Activated B cell treated with CpG ODN at 0.5 μM for 24 hours (primary cell): ENCODE measurements at regions of chrX and their contacts with region 1.

Region 1: DNA sequence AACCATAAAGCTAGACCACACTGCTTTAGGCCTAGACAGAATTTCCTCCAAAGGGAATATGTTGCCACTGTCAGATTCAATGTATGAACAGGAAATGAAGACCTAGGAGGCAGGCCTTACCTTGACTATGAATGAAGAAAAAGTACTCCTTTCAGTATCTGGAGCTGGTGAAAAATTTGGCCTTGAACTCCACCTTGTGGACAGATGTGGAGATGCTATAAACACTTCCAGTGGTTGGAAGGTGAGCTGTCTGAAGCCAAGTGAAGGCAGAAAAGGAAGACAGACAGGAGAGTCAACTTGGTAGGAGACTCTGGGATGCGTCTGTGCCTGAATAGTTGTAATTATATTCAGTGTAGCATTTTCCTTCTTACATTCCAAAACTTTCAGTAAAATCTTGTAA is 17.2 kb downstream of the SPIN3 start:
- DNase-seq: no peak
- ATAC-seq: peak; percentile 66
- H3K4me3 Mint-ChIP-seq: no peak overlapping the region
- H3K27ac Mint-ChIP-seq: no peak overlapping the region
- H3K4me1 Mint-ChIP-seq: no peaks in the 10 kb centered on the region
- H3K27me3 Mint-ChIP-seq: no peaks in the 10 kb centered on the region
- CTCF ChIP-seq: no peak

Region 2: GRCh38 chrX:56764153-56764974 is 213.8 kb before region 1 on chrX:
- CTCF ChIA-PET with region 1: interaction called, 21 read pairs
- POLR2A ChIA-PET with region 1: no interaction called
- intact Hi-C with region 1: no loop called
- DNase-seq: peak; percentile 18
- ATAC-seq: peak; percentile 72
- H3K4me3 Mint-ChIP-seq: peak overlapping the region; percentile 66
- H3K27ac Mint-ChIP-seq: peak overlapping the region; percentile 89
- H3K4me1 Mint-ChIP-seq: peaks cover 49% of the 10 kb centered on the region
- H3K27me3 Mint-ChIP-seq: no peaks in the 10 kb centered on the region
- CTCF ChIP-seq: no peak

Region 3: GRCh38 chrX:56802921-56803849 is 175.0 kb before region 1 on chrX:
- CTCF ChIA-PET with region 1: interaction called, 6 read pairs
- POLR2A ChIA-PET with region 1: no interaction called
- intact Hi-C with region 1: loop called (anchors 1 kb)
- DNase-seq: no peak
- ATAC-seq: no peak
- H3K4me3 Mint-ChIP-seq: no peak overlapping the region
- H3K27ac Mint-ChIP-seq: no peak overlapping the region
- H3K4me1 Mint-ChIP-seq: peaks cover 45% of the 10 kb centered on the region
- H3K27me3 Mint-ChIP-seq: no peaks in the 10 kb centered on the region
- CTCF ChIP-seq: no peak

Region 4: GRCh38 chrX:56995271-56995994 is 17.3 kb after region 1 on chrX and contains the start of gene SPIN3:
- CTCF ChIA-PET with region 1: interaction called, 7 read pairs
- POLR2A ChIA-PET with region 1: no interaction called
- intact Hi-C with region 1: loop called (anchors 2 kb)
- DNase-seq: peak; percentile 22
- ATAC-seq: peak; percentile 88
- H3K4me3 Mint-ChIP-seq: peak within 1 kb of the TSS; percentile 91
- H3K27ac Mint-ChIP-seq: peak within 1 kb of the TSS; percentile 88
- H3K4me1 Mint-ChIP-seq: peaks cover 31% of the 10 kb centered on the region
- H3K27me3 Mint-ChIP-seq: no peaks in the 10 kb centered on the region
- CTCF ChIP-seq: no peak
- total RNA-seq, gene SPIN3: 17.5 and 19.2 TPM in 2 replicates

Region 5: GRCh38 chrX:57453901-57454300 is 475.7 kb after region 1 on chrX:
- CTCF ChIA-PET with region 1: no interaction called
- POLR2A ChIA-PET with region 1: no interaction called
- intact Hi-C with region 1: loop called (anchors 2 kb)
- DNase-seq: no peak
- ATAC-seq: no peak
- H3K4me3 Mint-ChIP-seq: no peak overlapping the region
- H3K27ac Mint-ChIP-seq: no peak overlapping the region
- H3K4me1 Mint-ChIP-seq: no peaks in the 10 kb centered on the region
- H3K27me3 Mint-ChIP-seq: no peaks in the 10 kb centered on the region
- CTCF ChIP-seq: no peak

Region 6: GRCh38 chrX:58025979-58026378 is 1047.8 kb after region 1 on chrX:
- CTCF ChIA-PET with region 1: no interaction called
- POLR2A ChIA-PET with region 1: no interaction called
- intact Hi-C with region 1: loop called (anchors 10 kb)
- DNase-seq: no peak
- ATAC-seq: no peak
- H3K4me3 Mint-ChIP-seq: no peak overlapping the region
- H3K27ac Mint-ChIP-seq: no peak overlapping the region
- H3K4me1 Mint-ChIP-seq: no peaks in the 10 kb centered on the region
- H3K27me3 Mint-ChIP-seq: no peaks in the 10 kb centered on the region
- CTCF ChIP-seq: no peak